Activated naive CD8-positive, alpha-beta T cell treated with anti-CD3 and anti-CD28 coated beads, Interleukin-2, amount 10 ng/mL, durations not matched to agents 7 days and 5 days (primary cell): ENCODE measurements at regions of chr3 and their contacts with region 1.

Region 1: GRCh38 chr3:149042789-149043386 is 43.4 kb downstream of the HLTF start:
- DNase-seq: no peak
- ATAC-seq: peak; percentile 83
- H3K4me3 Mint-ChIP-seq: peak overlapping the region; percentile 78
- H3K27ac Mint-ChIP-seq: peak overlapping the region; percentile 88
- H3K4me1 Mint-ChIP-seq: peaks cover 18% of the 10 kb centered on the region
- H3K27me3 Mint-ChIP-seq: no peaks in the 10 kb centered on the region

Region 2: GRCh38 chr3:148991194-148992026 is 51.5 kb before region 1 on chr3 and contains the start of gene GYG1:
- POLR2A ChIA-PET with region 1: interaction called, 13 read pairs
- DNase-seq: peak; percentile 81
- ATAC-seq: peak; percentile 88
- H3K4me3 Mint-ChIP-seq: peak within 1 kb of the TSS; percentile 83
- H3K27ac Mint-ChIP-seq: peak within 1 kb of the TSS; percentile 75
- H3K4me1 Mint-ChIP-seq: peaks cover 27% of the 10 kb centered on the region
- H3K27me3 Mint-ChIP-seq: no peaks in the 10 kb centered on the region
- total RNA-seq, gene GYG1: 48.6 to 49.3 TPM

Region 3: GRCh38 chr3:149067883-149068282 is 25.0 kb after region 1 on chr3:
- POLR2A ChIA-PET with region 1: no interaction called
- DNase-seq: no peak
- ATAC-seq: no peak
- H3K4me3 Mint-ChIP-seq: no peak overlapping the region
- H3K27ac Mint-ChIP-seq: no peak overlapping the region
- H3K4me1 Mint-ChIP-seq: peaks cover 5% of the 10 kb centered on the region
- H3K27me3 Mint-ChIP-seq: no peaks in the 10 kb centered on the region